ENCODE measurements at regions of chr10 and their contacts with region 1.

Region 1: DNA sequence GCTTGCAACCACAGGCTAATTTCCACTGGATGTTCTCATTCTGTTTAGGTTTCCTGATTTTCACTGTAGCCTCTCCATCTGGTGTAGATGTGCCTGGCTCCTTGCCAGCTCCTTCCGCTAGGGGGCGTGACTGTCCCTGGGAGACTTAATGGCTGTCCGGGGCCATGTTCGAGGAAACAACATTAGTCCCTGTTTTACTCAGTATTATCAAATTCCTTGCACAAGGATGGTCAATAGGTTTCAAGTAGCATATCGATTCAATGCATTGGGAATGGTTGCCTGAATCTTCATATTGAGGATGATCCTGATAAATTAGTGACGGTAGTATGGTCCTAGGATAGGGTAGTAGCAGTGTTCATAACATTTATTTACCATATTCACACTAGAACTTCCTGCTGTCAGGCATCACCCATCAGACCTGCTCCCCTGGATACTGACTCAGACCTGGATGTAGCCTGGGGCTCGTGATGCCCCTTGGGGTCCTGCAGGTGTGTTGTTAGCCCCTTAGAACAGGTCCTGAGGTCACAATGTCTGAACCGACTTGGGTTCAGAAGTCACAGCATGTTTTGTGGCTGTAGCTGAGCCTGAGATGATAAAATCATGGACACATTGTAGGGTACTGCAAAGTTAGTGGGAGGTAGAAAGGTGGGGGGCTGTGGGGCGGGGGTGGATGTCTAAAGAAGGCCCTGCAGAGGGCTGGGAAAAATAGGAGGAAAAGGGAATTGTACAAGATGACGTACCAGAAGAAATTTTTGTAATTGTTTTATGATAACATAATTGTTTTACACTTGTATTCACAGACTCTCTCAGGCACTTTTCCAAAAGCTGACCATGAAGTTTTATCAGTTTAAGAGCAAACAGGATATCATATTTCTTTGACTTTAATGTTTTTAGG is 8.9 kb upstream of the EXOC6 start:
- DNase-seq: peak; percentile 77
- H3K4me3 ChIP-seq: no peak overlapping the region
- H3K27ac ChIP-seq: no peak overlapping the region
- H3K4me1 ChIP-seq: no peaks in the 10 kb centered on the region
- H3K27me3 ChIP-seq: no peaks in the 10 kb centered on the region
- CTCF ChIP-seq: peak; percentile 52

Region 2: GRCh38 chr10:92729886-92730285 is 109.6 kb before region 1 on chr10:
- intact Hi-C with region 1: no loop called
- DNase-seq: no peak
- H3K4me3 ChIP-seq: no peak overlapping the region
- H3K27ac ChIP-seq: no peak overlapping the region
- H3K4me1 ChIP-seq: no peaks in the 10 kb centered on the region
- H3K27me3 ChIP-seq: no peaks in the 10 kb centered on the region
- CTCF ChIP-seq: no peak

Region 3: DNA sequence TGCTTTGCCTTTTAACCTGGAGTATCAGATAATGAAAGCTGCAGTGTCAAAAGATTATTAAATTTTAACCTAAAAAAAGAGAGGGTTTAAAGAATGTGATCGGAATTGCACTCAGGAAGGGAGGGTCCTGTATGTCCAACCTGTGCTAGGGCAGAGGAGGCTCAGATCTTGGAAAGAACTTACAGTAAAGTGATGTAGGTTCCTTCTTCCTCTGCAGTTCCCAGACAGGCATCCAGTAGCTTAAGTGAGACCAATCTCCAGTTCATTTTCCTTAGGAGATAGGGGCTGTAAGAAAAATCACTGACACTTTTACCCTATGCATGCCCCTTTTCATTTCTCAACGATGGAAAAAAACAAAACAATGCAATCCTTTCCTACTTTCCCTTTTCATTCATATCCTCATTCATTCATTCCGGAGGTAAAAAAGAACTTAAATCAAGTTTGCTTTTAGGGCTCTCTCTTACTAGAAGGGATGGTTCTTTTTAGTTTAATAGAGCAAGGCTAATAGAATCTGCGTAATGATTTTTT is 37.1 kb after region 1 on chr10:
- intact Hi-C with region 1: loop called (anchors 5 kb)
- DNase-seq: no peak
- H3K4me3 ChIP-seq: no peak overlapping the region
- H3K27ac ChIP-seq: no peak overlapping the region
- H3K4me1 ChIP-seq: no peaks in the 10 kb centered on the region
- H3K27me3 ChIP-seq: no peaks in the 10 kb centered on the region
- CTCF ChIP-seq: no peak

Region 4: GRCh38 chr10:92997620-92998019 is 158.2 kb after region 1 on chr10:
- intact Hi-C with region 1: no loop called
- DNase-seq: no peak
- H3K4me3 ChIP-seq: no peak overlapping the region
- H3K27ac ChIP-seq: no peak overlapping the region
- H3K4me1 ChIP-seq: no peaks in the 10 kb centered on the region
- H3K27me3 ChIP-seq: no peaks in the 10 kb centered on the region
- CTCF ChIP-seq: no peak

Region 5: GRCh38 chr10:93106631-93107072 is 267.2 kb after region 1 on chr10:
- intact Hi-C with region 1: no loop called
- DNase-seq: no peak
- H3K4me3 ChIP-seq: no peak overlapping the region
- H3K27ac ChIP-seq: no peak overlapping the region
- H3K4me1 ChIP-seq: no peaks in the 10 kb centered on the region
- H3K27me3 ChIP-seq: no peaks in the 10 kb centered on the region
- CTCF ChIP-seq: no peak